OCI-LY7 (cell line): ENCODE measurements at regions of chr19 and their contacts with region 1.

Region 1: GRCh38 chr19:47243776-47244547 is 12.4 kb upstream of the CCDC9 start:
- DNase-seq: peak; percentile 97
- H3K4me3 ChIP-seq: peak overlapping the region; percentile 63
- H3K27ac ChIP-seq: peak overlapping the region; percentile 70
- H3K4me1 ChIP-seq: peaks cover 47% of the 10 kb centered on the region
- CTCF ChIP-seq: peak; percentile 96

Region 2: DNA sequence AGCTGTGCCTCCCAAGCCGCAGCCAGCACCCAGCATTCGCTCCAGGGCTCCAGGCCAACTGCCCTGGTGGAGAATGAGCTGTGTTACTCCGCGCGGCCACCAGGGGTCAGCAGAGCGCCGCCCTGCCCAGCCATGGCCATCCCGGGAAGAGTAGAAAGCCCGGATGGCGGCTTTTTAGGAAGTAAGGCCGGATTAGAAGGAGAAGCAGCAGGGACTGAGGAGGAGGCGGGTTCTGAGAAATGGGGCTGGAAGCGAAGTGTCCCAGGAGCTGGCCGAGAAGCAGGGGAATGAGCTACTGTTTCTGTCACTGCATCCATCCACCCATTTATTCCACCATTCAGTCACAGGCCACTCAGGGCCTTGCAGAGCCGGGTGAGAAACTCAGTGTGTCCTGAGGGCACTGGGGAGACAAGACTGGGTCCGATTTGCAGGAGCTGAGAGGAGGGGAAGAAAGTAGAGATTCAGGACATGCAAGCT is 230.9 kb before region 1 on chr19:
- CTCF ChIA-PET with region 1: no interaction called
- POLR2A ChIA-PET with region 1: no interaction called
- intact Hi-C with region 1: loop called (anchors 1 kb)
- DNase-seq: peak; percentile 43
- H3K4me3 ChIP-seq: no peak overlapping the region
- H3K27ac ChIP-seq: no peak overlapping the region
- H3K4me1 ChIP-seq: peaks cover 3% of the 10 kb centered on the region
- CTCF ChIP-seq: peak; percentile 98

Region 3: DNA sequence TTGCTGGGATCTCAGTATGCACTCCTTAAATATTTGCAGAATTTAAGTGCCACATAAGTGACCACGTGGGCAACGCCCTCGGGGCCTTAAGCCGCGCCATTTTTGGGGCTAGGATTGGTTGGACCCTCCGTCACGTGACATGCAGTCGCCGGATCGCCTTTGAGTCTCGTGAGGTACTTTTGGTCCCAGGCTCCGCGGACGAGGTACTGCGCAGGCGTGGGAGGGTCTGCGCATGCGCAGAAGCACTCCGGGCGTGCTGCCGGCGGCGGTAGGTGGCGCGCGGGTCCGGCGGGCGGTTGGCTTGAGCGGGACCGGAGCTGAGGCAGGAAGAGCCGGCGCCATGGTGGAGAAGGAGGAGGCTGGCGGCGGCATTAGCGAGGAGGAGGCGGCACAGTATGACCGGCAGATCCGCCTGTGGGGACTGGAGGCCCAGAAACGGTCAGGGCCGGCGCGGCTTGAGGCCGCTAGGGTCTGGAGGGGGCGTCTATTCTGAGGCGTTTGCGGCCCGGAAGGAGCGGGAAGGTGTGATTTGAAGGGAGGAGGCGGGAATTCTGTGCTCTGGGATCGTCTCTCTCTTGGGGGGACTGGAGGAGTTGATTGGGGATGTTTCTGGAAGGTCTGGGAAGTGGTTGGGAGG is 113.3 kb before region 1 on chr19 and contains the start of gene SAE1:
- CTCF ChIA-PET with region 1: no interaction called
- POLR2A ChIA-PET with region 1: interaction called, 5 read pairs
- intact Hi-C with region 1: loop called (anchors 1 kb)
- DNase-seq: peak; percentile 100
- H3K4me3 ChIP-seq: peak within 1 kb of the TSS; percentile 93
- H3K27ac ChIP-seq: peak within 1 kb of the TSS; percentile 80
- H3K4me1 ChIP-seq: peaks cover 35% of the 10 kb centered on the region
- CTCF ChIP-seq: peak; percentile 70
- total RNA-seq, gene SAE1: 165 and 185 TPM in 2 replicates

Region 4: GRCh38 chr19:47152224-47153017 is 91.5 kb before region 1 on chr19:
- CTCF ChIA-PET with region 1: no interaction called
- POLR2A ChIA-PET with region 1: interaction called, 3 read pairs
- intact Hi-C with region 1: loop called (anchors 1 kb)
- DNase-seq: no peak
- H3K4me3 ChIP-seq: no peak overlapping the region
- H3K27ac ChIP-seq: no peak overlapping the region
- H3K4me1 ChIP-seq: peaks cover 9% of the 10 kb centered on the region
- CTCF ChIP-seq: no peak

Region 5: GRCh38 chr19:47210689-47211316 is 33.2 kb before region 1 on chr19:
- CTCF ChIA-PET with region 1: interaction called, 18 read pairs
- POLR2A ChIA-PET with region 1: interaction called, 7 read pairs
- intact Hi-C with region 1: loop called (anchors 1 kb)
- DNase-seq: peak; percentile 88
- H3K4me3 ChIP-seq: peak overlapping the region; percentile 8
- H3K27ac ChIP-seq: peak overlapping the region; percentile 74
- H3K4me1 ChIP-seq: peaks cover 42% of the 10 kb centered on the region
- CTCF ChIP-seq: peak; percentile 91

Region 6: DNA sequence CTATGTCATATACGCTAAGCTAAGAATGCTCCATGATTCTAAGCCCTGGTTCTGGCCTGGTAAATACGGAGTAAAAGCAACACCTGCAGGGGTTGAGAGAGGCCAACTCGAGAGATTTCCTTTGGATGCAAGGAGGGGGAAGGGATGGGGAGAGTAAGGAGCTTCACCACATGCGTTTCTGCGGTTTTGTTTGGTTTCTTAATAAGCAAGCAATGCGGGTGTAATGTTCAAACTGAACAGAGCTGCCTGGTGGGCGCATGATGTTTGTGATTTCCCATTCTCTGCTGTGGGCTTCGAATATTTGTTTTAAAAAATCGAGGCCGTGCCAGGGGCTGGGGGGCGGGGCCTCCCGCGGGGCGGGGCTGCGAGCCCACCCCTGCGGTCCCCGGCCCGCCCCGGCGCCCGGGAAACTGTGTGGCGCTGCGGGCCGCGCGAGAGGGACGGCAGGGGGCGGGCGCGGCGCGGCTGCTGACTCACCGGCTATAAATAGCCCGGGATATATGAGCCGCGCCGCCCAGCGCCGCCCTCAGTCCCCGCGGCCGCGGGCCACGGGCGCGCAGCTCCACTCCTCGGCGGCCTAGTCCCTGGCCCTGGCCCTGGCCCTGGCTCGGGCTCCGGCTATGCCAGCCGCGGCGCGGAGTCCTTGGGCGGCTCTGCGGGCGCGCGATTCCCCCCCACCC is 18.1 kb before region 1 on chr19:
- CTCF ChIA-PET with region 1: interaction called, 3 read pairs
- POLR2A ChIA-PET with region 1: interaction called, 3 read pairs
- intact Hi-C with region 1: loop called (anchors 1 kb)
- DNase-seq: peak; percentile 92
- H3K4me3 ChIP-seq: peak overlapping the region; percentile 90
- H3K27ac ChIP-seq: peak overlapping the region; percentile 97
- H3K4me1 ChIP-seq: peaks cover 48% of the 10 kb centered on the region
- CTCF ChIP-seq: peak; percentile 43; the same call in 1 of the 2 replicates